B cell (primary cell): ENCODE measurements at regions of chr17 and their contacts with region 1.

Region 1: GRCh38 chr17:5355421-5356129 is 63.9 kb downstream of the NUP88 start:
- DNase-seq: no peak
- ATAC-seq: no peak
- H3K4me3 ChIP-seq: no peak overlapping the region
- H3K4me3 Mint-ChIP-seq: no peak overlapping the region
- H3K27ac ChIP-seq: no peak overlapping the region
- H3K27ac Mint-ChIP-seq: no peak overlapping the region
- H3K4me1 ChIP-seq: no peaks in the 10 kb centered on the region
- H3K4me1 Mint-ChIP-seq: no peaks in the 10 kb centered on the region
- H3K27me3 ChIP-seq: no peaks in the 10 kb centered on the region
- H3K27me3 Mint-ChIP-seq: no peaks in the 10 kb centered on the region
- CTCF ChIP-seq: no peak

Region 2: DNA sequence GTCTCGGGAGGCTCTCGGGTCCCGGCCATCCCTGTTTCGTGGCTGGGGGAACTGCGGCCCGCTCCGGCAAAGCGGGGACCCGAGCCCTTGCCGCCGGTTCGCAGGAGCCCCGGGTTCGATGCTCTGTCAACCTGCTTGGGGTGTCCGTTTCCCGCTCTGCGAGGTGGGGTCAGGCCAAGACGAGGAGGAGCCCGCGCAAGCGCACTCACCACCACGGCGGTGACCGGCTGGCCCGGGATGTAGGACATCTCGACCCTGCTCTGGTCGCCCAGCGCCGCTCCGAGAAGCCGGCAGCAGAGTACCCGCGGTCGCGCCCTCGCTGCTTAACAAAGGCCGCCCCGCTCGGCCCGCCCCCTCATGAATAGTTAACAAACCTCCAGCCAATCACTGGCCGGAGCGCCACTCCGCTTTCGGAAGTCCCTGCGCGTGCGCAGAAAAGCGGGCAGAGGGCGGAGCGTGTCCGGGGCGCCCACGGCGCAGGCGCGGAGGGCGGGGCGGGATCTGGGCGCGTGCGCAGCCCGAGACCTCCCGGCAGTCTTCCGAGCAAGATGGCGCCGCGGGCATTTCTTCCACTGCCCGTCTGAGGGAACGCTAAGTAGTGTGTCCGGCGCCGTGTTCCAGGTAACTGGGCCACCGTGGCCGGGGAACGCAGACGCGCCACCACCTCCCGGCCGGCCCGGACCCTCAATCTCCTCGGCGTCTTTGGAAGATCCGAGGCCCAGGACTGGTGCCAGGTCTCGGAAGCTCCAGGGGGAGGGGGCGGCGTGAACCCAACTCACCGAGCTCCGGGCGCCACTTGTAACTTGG is 1687.1 kb before region 1 on chr17 and contains the starts of genes EMC6 and TAX1BP3:
- CTCF ChIA-PET with region 1: no interaction called
- POLR2A ChIA-PET with region 1: interaction called, 10 read pairs
- intact Hi-C with region 1: no loop called
- DNase-seq: peak; percentile 99
- ATAC-seq: peak; percentile 90
- H3K4me3 ChIP-seq: peak within 1 kb of the TSS; percentile 60 to 99 (median 98)
- H3K4me3 Mint-ChIP-seq: peak within 1 kb of the TSS; percentile 96
- H3K27ac ChIP-seq: peak within 1 kb of the TSS; percentile 74 to 86
- H3K27ac Mint-ChIP-seq: peak within 1 kb of the TSS; percentile 94
- H3K4me1 ChIP-seq: peaks cover 11 to 21% of the 10 kb centered on the region in 2 donors
- H3K4me1 Mint-ChIP-seq: peaks cover 33% of the 10 kb centered on the region
- H3K27me3 ChIP-seq: no peaks in the 10 kb centered on the region
- H3K27me3 Mint-ChIP-seq: no peaks in the 10 kb centered on the region
- CTCF ChIP-seq: no peak
- total RNA-seq, gene EMC6: 23.4 and 26.6 TPM in 2 replicates
- total RNA-seq, gene TAX1BP3: 17.1 and 17.7 TPM in 2 replicates

Region 3: DNA sequence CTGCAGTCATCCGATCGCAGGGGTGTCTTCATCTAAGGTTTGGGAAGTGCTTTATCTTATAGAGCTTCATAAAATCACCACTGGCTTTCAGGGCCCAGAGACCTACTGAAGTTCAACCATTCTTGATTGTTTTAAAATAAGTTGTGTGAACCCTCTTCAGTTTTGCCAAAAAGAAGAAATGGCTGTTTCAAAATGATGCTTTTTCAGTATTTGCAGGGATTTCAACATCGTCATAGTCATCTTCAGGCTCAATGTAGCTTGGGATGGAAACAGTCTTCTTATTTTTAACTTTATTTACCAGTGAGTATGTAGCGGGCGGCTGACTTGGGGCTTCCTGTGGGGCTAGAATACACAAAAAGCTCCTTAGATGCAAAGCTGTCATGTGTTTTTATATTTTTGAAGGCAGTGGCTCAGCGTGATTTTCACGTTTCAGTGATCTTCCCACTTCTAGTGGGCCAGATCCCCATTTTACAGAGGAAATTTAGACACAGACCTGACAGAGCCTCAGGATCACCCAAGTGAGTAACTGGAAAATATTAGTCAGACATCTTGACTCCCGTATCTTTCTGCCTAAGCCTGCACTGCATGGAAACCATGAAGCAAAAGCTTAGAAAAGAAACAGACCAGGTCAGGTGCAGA is 144.8 kb before region 1 on chr17:
- CTCF ChIA-PET with region 1: no interaction called
- POLR2A ChIA-PET with region 1: no interaction called
- intact Hi-C with region 1: no loop called
- DNase-seq: peak; percentile 62
- ATAC-seq: peak; percentile 65
- H3K4me3 ChIP-seq: peak overlapping the region in 1 of 5 experiments; percentile 4
- H3K4me3 Mint-ChIP-seq: peak overlapping the region; percentile 74
- H3K27ac ChIP-seq: peak overlapping the region; percentile 91
- H3K27ac Mint-ChIP-seq: peak overlapping the region; percentile 93
- H3K4me1 ChIP-seq: peaks cover 64 to 80% of the 10 kb centered on the region in 2 donors
- H3K4me1 Mint-ChIP-seq: peaks cover 75% of the 10 kb centered on the region
- H3K27me3 ChIP-seq: no peaks in the 10 kb centered on the region
- H3K27me3 Mint-ChIP-seq: no peaks in the 10 kb centered on the region
- CTCF ChIP-seq: no peak

Region 4: GRCh38 chr17:5381542-5381941 is 26.0 kb after region 1 on chr17:
- CTCF ChIA-PET with region 1: interaction called, 3 read pairs
- POLR2A ChIA-PET with region 1: no interaction called
- intact Hi-C with region 1: loop called (anchors 2 kb)
- DNase-seq: no peak
- ATAC-seq: no peak
- H3K4me3 ChIP-seq: no peak overlapping the region
- H3K4me3 Mint-ChIP-seq: no peak overlapping the region
- H3K27ac ChIP-seq: no peak overlapping the region
- H3K27ac Mint-ChIP-seq: peak overlapping the region; percentile 54
- H3K4me1 ChIP-seq: no peaks in the 10 kb centered on the region
- H3K4me1 Mint-ChIP-seq: peaks cover 1% of the 10 kb centered on the region
- H3K27me3 ChIP-seq: no peaks in the 10 kb centered on the region
- H3K27me3 Mint-ChIP-seq: no peaks in the 10 kb centered on the region
- CTCF ChIP-seq: no peak